ENCODE measurements at regions of chr1 and their contacts with region 1.

Region 1: GRCh38 chr1:151728151-151729054 is 7.1 kb downstream of the RIIAD1 start:
- DNase-seq: peak in 1 of 2 experiments; percentile 53
- H3K4me3 ChIP-seq: peak overlapping the region in 1 of 4 experiments; percentile 39; a peak in 2 of 8 replicates
- H3K27ac ChIP-seq: no peak overlapping the region
- H3K4me1 ChIP-seq: peaks cover 3 to 11% (median 7%) of the 10 kb centered on the region in 4 experiments
- H3K27me3 ChIP-seq: no peaks in the 10 kb centered on the region; a peak in 2 of 7 replicates
- CTCF ChIP-seq: no peak
- EP300 ChIP-seq: no peak
- POLR2A ChIP-seq: no peak
- RAD21 ChIP-seq: no peak; a peak in 1 of 4 replicates

Region 2: DNA sequence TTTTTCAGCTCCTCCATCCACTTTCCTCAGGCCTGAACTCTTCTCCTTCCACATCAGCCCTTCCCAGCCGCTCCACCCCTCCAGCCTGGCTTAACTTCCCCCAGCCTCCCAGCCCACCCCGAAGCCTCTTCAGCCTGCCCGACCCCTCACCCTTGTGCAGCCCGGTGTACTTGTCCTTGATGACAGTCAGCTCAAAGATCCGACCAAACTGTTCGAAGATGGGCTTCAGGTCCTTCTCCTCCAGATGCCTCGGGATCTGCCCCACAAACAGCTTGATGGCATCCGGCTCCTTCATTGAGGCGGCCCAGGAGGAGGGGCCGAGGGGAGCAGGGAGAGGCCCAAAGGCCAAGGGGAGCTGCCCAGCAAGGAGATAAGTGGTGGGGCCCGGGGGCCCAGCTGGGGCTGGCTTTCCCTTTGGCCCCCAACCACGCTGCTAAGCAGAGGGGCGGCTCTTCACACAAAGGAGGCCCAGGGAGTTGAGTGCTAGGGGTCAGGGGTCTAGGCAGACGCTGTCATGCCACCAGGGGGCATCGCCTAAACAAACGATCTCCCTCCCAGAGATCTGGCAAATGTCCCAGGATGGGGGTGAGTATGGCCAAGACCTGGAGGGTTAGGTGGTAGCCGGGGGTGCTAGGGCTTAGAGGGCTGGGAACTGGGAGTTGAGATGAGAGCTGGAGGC is 12.5 kb before region 1 on chr1:
- CTCF ChIA-PET with region 1: interaction called, 41 read pairs
- POLR2A ChIA-PET with region 1: interaction called, 10 read pairs
- DNase-seq: peak in 1 of 2 experiments; percentile 82
- H3K4me3 ChIP-seq: peak overlapping the region; percentile 29 to 60 (median 54); a peak in 7 of 8 replicates
- H3K27ac ChIP-seq: no peak overlapping the region
- H3K4me1 ChIP-seq: peaks cover under 1 to 8% (median 3%) of the 10 kb centered on the region in 4 experiments
- H3K27me3 ChIP-seq: peaks cover 0 to 17% (median 11%) of the 10 kb centered on the region in 4 experiments; a peak in 5 of 7 replicates
- CTCF ChIP-seq: peak; percentile 47 to 57 (median 55)
- EP300 ChIP-seq: no peak
- POLR2A ChIP-seq: no peak
- RAD21 ChIP-seq: peak; percentile 41 to 51

Region 3: GRCh38 chr1:151756291-151756690 is 27.9 kb after region 1 on chr1:
- CTCF ChIA-PET with region 1: no interaction called
- POLR2A ChIA-PET with region 1: no interaction called
- DNase-seq: no peak
- H3K4me3 ChIP-seq: no peak overlapping the region
- H3K27ac ChIP-seq: no peak overlapping the region
- H3K4me1 ChIP-seq: no peaks in the 10 kb centered on the region
- H3K27me3 ChIP-seq: no peaks in the 10 kb centered on the region
- CTCF ChIP-seq: no peak
- EP300 ChIP-seq: no peak
- POLR2A ChIP-seq: no peak
- RAD21 ChIP-seq: no peak

Measured in H1 (cell line).